ENCODE measurements at regions of chr7 and their contacts with region 1.

Region 1: GRCh38 chr7:37916673-37917660 is at the start of gene SFRP4:
- DNase-seq: peak; percentile 19
- ATAC-seq: no peak
- H3K4me3 Mint-ChIP-seq: peak within 1 kb of the TSS; percentile 58
- H3K27ac Mint-ChIP-seq: no peak within 1 kb of the TSS
- H3K4me1 Mint-ChIP-seq: peaks cover 18% of the 10 kb centered on the region
- H3K27me3 Mint-ChIP-seq: peaks cover 68% of the 10 kb centered on the region
- CTCF ChIP-seq: peak; percentile 79
- total RNA-seq, gene SFRP4: not detected

Region 2: GRCh38 chr7:37901236-37901827 is 15.6 kb before region 1 on chr7:
- CTCF ChIA-PET with region 1: interaction called, 20 read pairs
- POLR2A ChIA-PET with region 1: no interaction called
- intact Hi-C with region 1: no loop called
- DNase-seq: no peak
- ATAC-seq: peak; percentile 42
- H3K4me3 Mint-ChIP-seq: no peak overlapping the region
- H3K27ac Mint-ChIP-seq: no peak overlapping the region
- H3K4me1 Mint-ChIP-seq: no peaks in the 10 kb centered on the region
- H3K27me3 Mint-ChIP-seq: peaks cover 2% of the 10 kb centered on the region
- CTCF ChIP-seq: no peak

Region 3: DNA sequence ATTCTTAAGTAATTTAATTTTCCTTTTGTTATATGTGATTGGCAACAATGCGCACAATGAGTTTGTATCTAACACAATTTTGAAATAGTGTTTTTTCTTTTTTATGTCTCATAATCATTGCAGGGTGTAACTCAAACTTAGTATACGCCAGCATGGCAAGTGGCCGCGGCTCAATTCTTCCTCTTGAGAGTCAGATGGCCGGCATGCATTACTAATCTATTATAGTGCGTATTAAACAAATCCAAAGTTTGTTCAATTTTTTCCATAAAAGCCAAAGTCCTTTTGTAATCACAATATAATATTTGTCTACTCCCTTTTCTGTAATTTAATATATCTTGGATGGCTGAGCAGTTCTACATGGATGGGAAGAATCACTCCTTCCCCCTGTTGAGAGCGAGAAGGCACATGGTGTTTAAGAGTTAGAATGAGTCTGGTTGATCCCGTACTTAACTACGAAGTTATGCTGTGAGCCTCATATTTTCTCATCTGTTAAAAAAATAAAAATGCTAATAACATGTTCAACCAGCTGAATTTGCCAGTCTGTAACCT is 16.1 kb after region 1 on chr7:
- CTCF ChIA-PET with region 1: interaction called, 10 read pairs
- POLR2A ChIA-PET with region 1: no interaction called
- intact Hi-C with region 1: no loop called
- DNase-seq: no peak
- ATAC-seq: no peak
- H3K4me3 Mint-ChIP-seq: no peak overlapping the region
- H3K27ac Mint-ChIP-seq: no peak overlapping the region
- H3K4me1 Mint-ChIP-seq: no peaks in the 10 kb centered on the region
- H3K27me3 Mint-ChIP-seq: no peaks in the 10 kb centered on the region
- CTCF ChIP-seq: no peak